IMR-90 (cell line): ENCODE measurements at regions of chr6 and their contacts with region 1.

Region 1: GRCh38 chr6:17542243-17542642 is 57.9 kb upstream of the FAM8A1 start:
- DNase-seq: no peak
- ATAC-seq: no peak
- H3K4me3 ChIP-seq: no peak overlapping the region
- H3K27ac ChIP-seq: no peak overlapping the region
- H3K4me1 ChIP-seq: no peaks in the 10 kb centered on the region
- H3K27me3 ChIP-seq: no peaks in the 10 kb centered on the region
- CTCF ChIP-seq: no peak
- POLR2A ChIP-seq: no peak
- RAD21 ChIP-seq: no peak

Region 2: DNA sequence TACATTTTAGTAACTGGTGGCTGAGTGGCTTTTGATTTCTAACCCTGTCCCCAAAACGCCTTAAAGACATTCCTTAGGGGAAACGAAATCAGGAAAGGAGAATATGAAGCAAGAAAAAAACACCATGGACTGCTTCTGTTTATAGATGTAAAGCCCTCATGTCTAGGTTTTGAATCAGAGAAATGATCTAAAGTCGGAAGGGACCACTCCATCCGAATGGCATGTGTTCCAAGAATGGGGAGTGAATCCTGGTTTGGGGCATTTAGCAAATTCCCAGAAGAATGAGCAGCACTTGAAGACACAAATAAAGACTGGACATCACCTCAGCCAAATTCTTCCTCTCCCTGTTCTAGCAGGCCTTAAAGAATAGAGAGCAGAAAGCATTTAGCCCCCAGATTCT is 83.3 kb before region 1 on chr6:
- CTCF ChIA-PET with region 1: no interaction called
- POLR2A ChIA-PET with region 1: no interaction called
- dilution Hi-C with region 1: no loop called
- in situ Hi-C with region 1: no loop called
- intact Hi-C with region 1: no loop called
- DNase-seq: peak; percentile 43
- ATAC-seq: no peak
- H3K4me3 ChIP-seq: no peak overlapping the region
- H3K27ac ChIP-seq: no peak overlapping the region
- H3K4me1 ChIP-seq: peaks cover 4% of the 10 kb centered on the region; the same call in 1 of the 2 replicates
- H3K27me3 ChIP-seq: no peaks in the 10 kb centered on the region
- CTCF ChIP-seq: no peak
- POLR2A ChIP-seq: no peak
- RAD21 ChIP-seq: no peak

Region 3: GRCh38 chr6:17584241-17584803 is 42.1 kb after region 1 on chr6:
- CTCF ChIA-PET with region 1: interaction called, 10 read pairs
- POLR2A ChIA-PET with region 1: no interaction called
- dilution Hi-C with region 1: no loop called
- in situ Hi-C with region 1: no loop called
- intact Hi-C with region 1: no loop called
- DNase-seq: peak; percentile 86
- ATAC-seq: peak; percentile 91
- H3K4me3 ChIP-seq: no peak overlapping the region
- H3K27ac ChIP-seq: no peak overlapping the region
- H3K4me1 ChIP-seq: peaks cover 2% of the 10 kb centered on the region; the same call in 1 of the 2 replicates
- H3K27me3 ChIP-seq: no peaks in the 10 kb centered on the region
- CTCF ChIP-seq: peak; percentile 79
- POLR2A ChIP-seq: no peak
- RAD21 ChIP-seq: peak; percentile 83

Region 4: GRCh38 chr6:17628873-17629272 is 86.6 kb after region 1 on chr6:
- CTCF ChIA-PET with region 1: no interaction called
- POLR2A ChIA-PET with region 1: no interaction called
- dilution Hi-C with region 1: no loop called
- in situ Hi-C with region 1: no loop called
- intact Hi-C with region 1: no loop called
- DNase-seq: no peak
- ATAC-seq: no peak
- H3K4me3 ChIP-seq: no peak overlapping the region
- H3K27ac ChIP-seq: no peak overlapping the region
- H3K4me1 ChIP-seq: no peaks in the 10 kb centered on the region; the same call in 1 of the 2 replicates
- H3K27me3 ChIP-seq: no peaks in the 10 kb centered on the region
- CTCF ChIP-seq: no peak
- POLR2A ChIP-seq: no peak
- RAD21 ChIP-seq: no peak

Region 5: GRCh38 chr6:17884498-17885478 is 342.5 kb after region 1 on chr6:
- CTCF ChIA-PET with region 1: no interaction called
- POLR2A ChIA-PET with region 1: no interaction called
- dilution Hi-C with region 1: no loop called
- in situ Hi-C with region 1: no loop called
- intact Hi-C with region 1: no loop called
- DNase-seq: peak; percentile 19
- ATAC-seq: peak; percentile 61
- H3K4me3 ChIP-seq: no peak overlapping the region
- H3K27ac ChIP-seq: no peak overlapping the region
- H3K4me1 ChIP-seq: peaks cover 6% of the 10 kb centered on the region
- H3K27me3 ChIP-seq: no peaks in the 10 kb centered on the region
- CTCF ChIP-seq: no peak
- POLR2A ChIP-seq: no peak
- RAD21 ChIP-seq: no peak

Region 6: DNA sequence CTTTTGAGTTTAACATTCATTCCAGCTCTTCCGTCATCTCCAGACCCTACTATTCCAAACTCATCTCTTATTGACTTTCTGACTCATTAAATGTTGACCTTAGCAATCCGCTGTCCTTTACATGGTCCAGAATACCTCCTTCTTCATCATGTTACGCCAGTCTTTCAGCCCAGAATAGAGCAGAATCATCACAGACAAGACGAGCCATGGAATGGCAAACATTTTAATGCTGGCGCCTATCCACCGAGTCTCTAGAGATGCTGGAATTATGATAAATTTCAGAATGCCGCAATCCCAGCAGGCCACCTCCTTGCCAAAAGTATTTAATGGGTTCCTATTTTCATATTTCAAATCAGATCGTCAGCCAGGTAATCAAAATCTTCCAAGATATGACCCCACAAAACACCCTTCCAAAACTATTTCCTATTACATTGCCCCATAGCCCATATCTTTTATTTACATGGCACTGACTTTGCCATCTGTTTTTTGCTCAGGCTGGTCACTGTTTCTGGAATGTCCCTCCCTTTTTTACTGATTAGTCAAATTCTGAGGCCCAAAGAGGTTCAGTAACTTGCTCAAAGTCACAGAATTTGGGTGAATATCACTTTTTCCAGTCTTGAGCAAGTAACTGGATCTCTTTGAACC is 539.2 kb after region 1 on chr6:
- CTCF ChIA-PET with region 1: no interaction called
- POLR2A ChIA-PET with region 1: no interaction called
- dilution Hi-C with region 1: no loop called
- in situ Hi-C with region 1: no loop called
- intact Hi-C with region 1: no loop called
- DNase-seq: peak; percentile 4
- ATAC-seq: no peak
- H3K4me3 ChIP-seq: no peak overlapping the region
- H3K27ac ChIP-seq: no peak overlapping the region
- H3K4me1 ChIP-seq: peaks cover 3% of the 10 kb centered on the region
- H3K27me3 ChIP-seq: peaks cover 1% of the 10 kb centered on the region; the same call in 1 of the 2 replicates
- CTCF ChIP-seq: no peak
- POLR2A ChIP-seq: no peak
- RAD21 ChIP-seq: no peak